CD4-positive, alpha-beta T cell (primary cell): ENCODE measurements at regions of chr13 and their contacts with region 1.

Region 1: GRCh38 chr13:19633479-19634255 is at the start of gene MPHOSPH8:
- DNase-seq: peak; percentile 86 to 98 (median 92)
- ATAC-seq: peak; percentile 96
- H3K4me3 ChIP-seq: peak within 1 kb of the TSS; percentile 84
- H3K4me3 Mint-ChIP-seq: peak within 1 kb of the TSS; percentile 100
- H3K27ac ChIP-seq: peak within 1 kb of the TSS; percentile 76 to 79
- H3K27ac Mint-ChIP-seq: peak within 1 kb of the TSS; percentile 97
- H3K4me1 ChIP-seq: peaks cover 29% of the 10 kb centered on the region
- H3K4me1 Mint-ChIP-seq: peaks cover 38% of the 10 kb centered on the region
- H3K27me3 ChIP-seq: no peaks in the 10 kb centered on the region
- H3K27me3 Mint-ChIP-seq: no peaks in the 10 kb centered on the region
- CTCF ChIP-seq: no peak
- total RNA-seq, gene MPHOSPH8: 48.0 to 51.2 TPM

Region 2: GRCh38 chr13:19587635-19588300 is 45.9 kb before region 1 on chr13:
- CTCF ChIA-PET with region 1: interaction called, 3 read pairs
- POLR2A ChIA-PET with region 1: interaction called, 8 read pairs
- intact Hi-C with region 1: loop called in 1 of 2 experiments (anchors 5 kb)
- DNase-seq: peak in 5 of 14 experiments; percentile 15 to 67 (median 59)
- ATAC-seq: peak; percentile 45
- H3K4me3 ChIP-seq: peak overlapping the region; percentile 43
- H3K4me3 Mint-ChIP-seq: peak overlapping the region; percentile 67
- H3K27ac ChIP-seq: peak overlapping the region; percentile 25 to 47
- H3K27ac Mint-ChIP-seq: peak overlapping the region; percentile 80
- H3K4me1 ChIP-seq: peaks cover 21% of the 10 kb centered on the region
- H3K4me1 Mint-ChIP-seq: peaks cover 27% of the 10 kb centered on the region
- H3K27me3 ChIP-seq: no peaks in the 10 kb centered on the region
- H3K27me3 Mint-ChIP-seq: no peaks in the 10 kb centered on the region
- CTCF ChIP-seq: peak; percentile 63

Region 3: DNA sequence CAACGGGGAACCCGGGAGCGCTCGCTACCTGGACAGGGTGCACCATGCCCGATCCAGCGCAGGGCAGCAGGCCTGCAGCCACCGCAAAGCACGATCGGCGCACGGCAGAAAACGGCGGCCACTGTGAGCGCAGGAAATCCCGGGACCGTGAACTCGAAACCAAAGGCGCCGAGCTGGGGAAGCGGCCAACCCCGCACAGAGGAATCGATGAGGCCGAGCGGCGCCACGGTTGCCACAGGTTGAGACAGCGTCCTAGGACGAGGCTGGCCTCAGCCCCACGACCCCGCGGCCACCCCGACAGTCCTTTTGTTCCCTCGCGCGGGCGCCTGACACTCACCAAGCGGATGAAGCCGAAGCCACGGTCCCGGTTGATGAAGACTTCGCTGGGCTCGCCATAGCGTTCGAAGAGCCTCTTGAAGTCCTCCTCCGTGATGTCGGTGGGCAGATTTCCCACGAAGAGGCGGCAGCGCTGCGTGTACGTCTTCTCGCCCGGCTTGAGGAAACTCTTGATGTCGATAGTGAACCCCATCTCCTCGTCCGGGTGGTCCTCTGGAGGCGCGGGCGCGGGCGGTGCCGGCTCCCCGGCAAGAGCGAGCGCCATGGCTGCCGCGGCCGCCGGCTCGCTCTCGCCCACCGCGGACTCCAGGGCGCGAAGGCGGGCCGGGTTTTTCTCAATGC is 148.5 kb after region 1 on chr13:
- CTCF ChIA-PET with region 1: no interaction called
- POLR2A ChIA-PET with region 1: interaction called, 19 read pairs
- intact Hi-C with region 1: loop called (anchors 5 kb)
- DNase-seq: peak in 13 of 14 experiments; percentile 30 to 74 (median 46)
- ATAC-seq: peak; percentile 49
- H3K4me3 ChIP-seq: peak overlapping the region; percentile 100
- H3K4me3 Mint-ChIP-seq: peak overlapping the region; percentile 91
- H3K27ac ChIP-seq: peak overlapping the region; percentile 85 to 96
- H3K27ac Mint-ChIP-seq: peak overlapping the region; percentile 95
- H3K4me1 ChIP-seq: peaks cover 16% of the 10 kb centered on the region
- H3K4me1 Mint-ChIP-seq: peaks cover 11% of the 10 kb centered on the region
- H3K27me3 ChIP-seq: no peaks in the 10 kb centered on the region
- H3K27me3 Mint-ChIP-seq: no peaks in the 10 kb centered on the region
- CTCF ChIP-seq: no peak